ENCODE measurements at regions of chr6 and their contacts with region 1.

Region 1: GRCh38 chr6:26322645-26323482 is 42.1 kb upstream of the BTN3A2 start:
- DNase-seq: peak in 1 of 2 experiments; percentile 81
- H3K4me3 ChIP-seq: peak overlapping the region; percentile 70 to 89 (median 78)
- H3K27ac ChIP-seq: no peak overlapping the region
- H3K4me1 ChIP-seq: peaks cover 0 to 5% (median 2%) of the 10 kb centered on the region in 4 experiments; a peak in 3 of 7 replicates
- H3K27me3 ChIP-seq: peaks cover 0 to 4% (median 0%) of the 10 kb centered on the region in 4 experiments; a peak in 1 of 7 replicates
- CTCF ChIP-seq: no peak
- EP300 ChIP-seq: no peak
- POLR2A ChIP-seq: no peak
- RAD21 ChIP-seq: no peak

Region 2: DNA sequence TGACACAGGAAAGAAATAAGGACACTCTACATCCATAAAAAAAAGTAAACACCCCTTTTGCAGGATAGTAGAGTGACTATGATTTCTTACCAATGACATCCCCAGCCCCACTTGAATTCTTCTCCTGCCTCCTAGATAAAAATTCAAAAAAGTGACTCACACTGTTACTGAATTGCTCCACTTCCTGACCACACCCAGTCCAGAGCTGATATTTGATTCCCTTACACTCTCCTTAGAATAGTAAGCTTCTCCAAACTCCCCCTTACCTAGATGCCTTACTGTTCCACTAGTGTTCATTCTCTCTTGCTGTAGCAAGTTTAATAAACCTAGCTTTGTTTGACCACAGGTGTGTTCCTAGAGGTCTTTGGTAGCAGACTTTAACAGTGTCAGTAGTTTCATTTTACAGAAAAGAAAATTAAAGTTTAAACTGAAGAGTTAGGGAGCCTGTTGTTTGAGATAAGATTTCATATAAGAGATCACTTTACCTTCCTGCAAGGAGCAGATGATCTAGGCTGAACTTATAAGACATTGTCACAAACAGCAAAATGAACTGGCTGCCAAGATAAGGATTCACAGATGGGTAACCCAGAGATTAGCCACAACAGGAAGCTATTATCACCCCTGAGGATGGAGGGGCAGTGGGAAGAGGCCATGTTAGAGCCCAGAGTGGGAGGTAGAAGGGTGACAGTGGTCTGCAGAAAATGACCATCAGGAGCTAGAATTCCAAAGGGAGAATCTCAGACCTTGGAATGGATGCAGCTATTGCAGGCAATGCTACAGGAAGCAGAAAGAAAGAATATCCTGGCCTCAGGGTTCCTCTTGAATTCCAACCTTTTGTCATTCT is 13.7 kb after region 1 on chr6:
- CTCF ChIA-PET with region 1: interaction called, 10 read pairs
- POLR2A ChIA-PET with region 1: interaction called, 3 read pairs
- DNase-seq: no peak
- H3K4me3 ChIP-seq: no peak overlapping the region
- H3K27ac ChIP-seq: no peak overlapping the region
- H3K4me1 ChIP-seq: peaks cover 0 to 3% (median 0%) of the 10 kb centered on the region in 4 experiments; a peak in 2 of 7 replicates
- H3K27me3 ChIP-seq: peaks cover 0 to 10% (median 8%) of the 10 kb centered on the region in 4 experiments; a peak in 5 of 7 replicates
- CTCF ChIP-seq: no peak
- EP300 ChIP-seq: no peak
- POLR2A ChIP-seq: no peak
- RAD21 ChIP-seq: no peak

Region 3: GRCh38 chr6:26428206-26428605 is 105.3 kb after region 1 on chr6:
- CTCF ChIA-PET with region 1: no interaction called
- POLR2A ChIA-PET with region 1: no interaction called
- DNase-seq: no peak
- H3K4me3 ChIP-seq: no peak overlapping the region
- H3K27ac ChIP-seq: no peak overlapping the region
- H3K4me1 ChIP-seq: no peaks in the 10 kb centered on the region
- H3K27me3 ChIP-seq: no peaks in the 10 kb centered on the region
- CTCF ChIP-seq: no peak
- EP300 ChIP-seq: no peak
- POLR2A ChIP-seq: no peak
- RAD21 ChIP-seq: no peak

Region 4: DNA sequence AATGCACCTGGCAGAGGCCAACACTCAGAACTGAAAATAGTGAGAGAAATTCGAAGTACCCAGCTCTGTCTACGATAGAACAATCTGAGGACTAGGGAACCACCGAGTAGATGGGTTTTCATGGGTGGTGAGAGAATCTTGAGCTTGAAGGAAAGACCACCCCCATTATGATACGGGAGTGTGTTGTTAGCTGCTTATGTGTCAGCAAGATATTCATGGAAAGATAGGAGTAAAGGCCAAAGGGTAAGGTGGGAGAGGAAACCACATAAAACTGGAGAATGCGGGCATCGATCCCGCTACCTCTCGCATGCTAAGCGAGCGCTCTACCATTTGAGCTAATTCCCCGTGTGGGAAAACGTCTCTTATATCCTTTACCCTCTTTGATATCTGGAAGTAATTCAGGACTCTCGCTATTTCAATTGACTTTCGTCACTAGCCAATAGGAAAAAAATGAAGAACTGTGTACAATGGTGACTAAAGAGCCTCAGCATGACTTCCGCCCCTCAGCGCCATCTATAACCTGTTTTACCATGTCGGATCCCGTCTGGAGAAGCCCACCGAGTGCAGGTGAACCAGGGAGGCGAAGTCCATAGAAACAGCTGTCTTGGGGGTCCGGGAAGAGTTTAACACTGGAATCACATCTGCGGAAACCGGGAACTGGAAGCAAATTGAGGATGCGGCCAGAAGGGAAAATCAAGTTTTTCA is 248.9 kb after region 1 on chr6:
- CTCF ChIA-PET with region 1: interaction called, 11 read pairs
- POLR2A ChIA-PET with region 1: no interaction called
- DNase-seq: peak in 1 of 2 experiments; percentile 87
- H3K4me3 ChIP-seq: peak overlapping the region; percentile 86 to 92 (median 88)
- H3K27ac ChIP-seq: peak overlapping the region; percentile 35; the same call in 1 of the 2 replicates
- H3K4me1 ChIP-seq: no peaks in the 10 kb centered on the region
- H3K27me3 ChIP-seq: no peaks in the 10 kb centered on the region
- CTCF ChIP-seq: 0 out of 4 replicates have a peak, but pooled peaks of 1 of the 3 experiments have one; percentile 5
- EP300 ChIP-seq: no peak; a peak in 1 of 3 replicates
- POLR2A ChIP-seq: no peak
- RAD21 ChIP-seq: no peak